ENCODE measurements at regions of chr18 and their contacts with region 1.

Region 1: GRCh38 chr18:76492669-76493212 is 2.3 kb downstream of the ZNF516 start:
- DNase-seq: peak; percentile 99
- H3K4me3 Mint-ChIP-seq: peak overlapping the region; percentile 84
- H3K27ac Mint-ChIP-seq: peak overlapping the region; percentile 42
- H3K4me1 Mint-ChIP-seq: peaks cover 33% of the 10 kb centered on the region
- H3K27me3 Mint-ChIP-seq: peaks cover 60% of the 10 kb centered on the region

Region 2: GRCh38 chr18:76195601-76196000 is 297.1 kb before region 1 on chr18:
- CTCF ChIA-PET with region 1: no interaction called
- POLR2A ChIA-PET with region 1: no interaction called
- intact Hi-C with region 1: no loop called
- DNase-seq: no peak
- H3K4me3 Mint-ChIP-seq: no peak overlapping the region
- H3K27ac Mint-ChIP-seq: no peak overlapping the region
- H3K4me1 Mint-ChIP-seq: no peaks in the 10 kb centered on the region
- H3K27me3 Mint-ChIP-seq: peaks cover 13% of the 10 kb centered on the region

Region 3: GRCh38 chr18:76374330-76375281 is 118.1 kb before region 1 on chr18:
- CTCF ChIA-PET with region 1: no interaction called
- POLR2A ChIA-PET with region 1: no interaction called
- intact Hi-C with region 1: loop called (anchors 2 kb)
- DNase-seq: peak; percentile 75
- H3K4me3 Mint-ChIP-seq: no peak overlapping the region
- H3K27ac Mint-ChIP-seq: peak overlapping the region; percentile 64
- H3K4me1 Mint-ChIP-seq: peaks cover 50% of the 10 kb centered on the region
- H3K27me3 Mint-ChIP-seq: peaks cover 1% of the 10 kb centered on the region

Region 4: DNA sequence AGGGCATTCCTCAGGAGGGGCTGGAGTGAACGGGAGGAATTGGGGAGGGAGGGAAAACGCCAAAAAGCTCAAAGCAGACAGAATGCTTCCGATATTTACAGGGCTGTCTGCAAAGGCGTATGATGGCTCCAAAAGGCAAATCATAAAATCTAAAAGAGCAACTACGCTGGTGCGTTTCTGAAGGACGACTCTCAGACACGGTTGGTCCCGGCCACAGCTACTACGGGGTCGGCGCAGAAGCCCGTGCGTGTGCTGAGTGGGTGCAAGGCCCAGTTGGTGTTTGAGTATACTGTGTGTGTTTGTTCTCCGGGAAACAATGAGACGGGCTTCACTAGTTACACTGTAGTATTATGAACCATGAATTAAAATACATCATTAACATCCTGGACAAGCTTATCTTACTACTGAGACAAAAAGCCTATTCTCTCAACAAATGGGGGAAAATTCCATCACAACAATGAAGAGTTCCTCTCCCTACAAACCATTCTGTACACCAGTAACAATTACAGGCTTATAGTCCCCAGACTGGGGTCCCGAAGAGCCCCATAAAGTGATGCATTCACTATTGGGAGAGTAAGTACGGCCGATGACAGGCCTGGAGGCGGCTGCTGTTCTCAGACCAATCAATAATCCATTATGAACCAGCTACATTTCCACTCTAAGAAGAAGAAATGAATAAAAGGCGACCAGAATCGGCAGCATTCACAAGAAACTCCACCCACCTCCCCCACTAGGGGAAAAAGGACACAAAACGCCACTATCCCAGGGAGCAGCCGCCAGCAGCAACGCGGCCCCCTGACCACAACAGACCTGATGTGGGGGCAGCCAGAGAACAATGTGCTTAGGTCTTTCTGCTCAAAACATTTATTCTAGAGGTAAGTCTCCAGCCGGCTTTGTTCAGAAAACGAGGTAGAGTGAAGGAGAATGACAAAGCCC is 41.1 kb before region 1 on chr18:
- CTCF ChIA-PET with region 1: no interaction called
- POLR2A ChIA-PET with region 1: no interaction called
- intact Hi-C with region 1: loop called (anchors 2 kb)
- DNase-seq: peak; percentile 7
- H3K4me3 Mint-ChIP-seq: peak overlapping the region; percentile 72
- H3K27ac Mint-ChIP-seq: no peak overlapping the region
- H3K4me1 Mint-ChIP-seq: peaks cover 19% of the 10 kb centered on the region
- H3K27me3 Mint-ChIP-seq: peaks cover 38% of the 10 kb centered on the region

Region 5: GRCh38 chr18:76620321-76621170 is 127.8 kb after region 1 on chr18:
- CTCF ChIA-PET with region 1: no interaction called
- POLR2A ChIA-PET with region 1: no interaction called
- intact Hi-C with region 1: loop called (anchors 5 kb)
- DNase-seq: peak; percentile 38
- H3K4me3 Mint-ChIP-seq: no peak overlapping the region
- H3K27ac Mint-ChIP-seq: no peak overlapping the region
- H3K4me1 Mint-ChIP-seq: peaks cover 4% of the 10 kb centered on the region
- H3K27me3 Mint-ChIP-seq: peaks cover 33% of the 10 kb centered on the region

Region 6: DNA sequence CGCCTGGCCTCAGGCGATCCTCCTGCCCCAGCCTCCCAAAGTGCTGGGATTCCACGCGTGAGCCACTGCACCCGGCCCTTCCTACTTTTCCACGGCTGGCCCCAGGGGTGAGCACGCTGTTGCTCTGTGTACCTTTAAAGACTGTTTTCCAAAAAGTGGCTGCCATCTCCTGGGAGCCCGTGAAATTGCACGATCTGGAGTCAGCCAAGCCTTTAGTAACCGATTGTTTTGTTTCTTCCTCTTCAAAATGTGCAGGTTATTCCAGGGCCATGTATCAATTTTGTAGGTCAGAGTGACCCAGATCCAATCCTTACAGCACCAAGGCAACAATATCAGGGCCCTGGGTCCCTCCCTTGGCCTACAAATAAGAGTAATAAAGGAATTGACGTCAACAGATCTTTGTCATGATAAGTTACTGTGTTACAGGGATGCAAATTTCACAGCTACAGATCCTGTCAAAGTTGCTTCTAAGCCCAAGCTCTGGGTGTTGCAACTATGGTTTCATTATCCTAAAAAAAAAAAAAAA is 194.1 kb after region 1 on chr18:
- CTCF ChIA-PET with region 1: no interaction called
- POLR2A ChIA-PET with region 1: no interaction called
- intact Hi-C with region 1: loop called (anchors 2 kb)
- DNase-seq: peak; percentile 27
- H3K4me3 Mint-ChIP-seq: no peak overlapping the region
- H3K27ac Mint-ChIP-seq: peak overlapping the region; percentile 10
- H3K4me1 Mint-ChIP-seq: peaks cover 16% of the 10 kb centered on the region
- H3K27me3 Mint-ChIP-seq: peaks cover 39% of the 10 kb centered on the region

Region 7: GRCh38 chr18:76822510-76823160 is 329.9 kb after region 1 on chr18 and contains the start of gene ZNF236:
- CTCF ChIA-PET with region 1: no interaction called
- POLR2A ChIA-PET with region 1: no interaction called
- intact Hi-C with region 1: loop called (anchors 1 kb)
- DNase-seq: peak; percentile 72
- H3K4me3 Mint-ChIP-seq: peak within 1 kb of the TSS; percentile 89
- H3K27ac Mint-ChIP-seq: peak within 1 kb of the TSS; percentile 87
- H3K4me1 Mint-ChIP-seq: peaks cover 51% of the 10 kb centered on the region
- H3K27me3 Mint-ChIP-seq: no peaks in the 10 kb centered on the region
- total RNA-seq, gene ZNF236: 14.4 to 15.6 TPM

Region 8: DNA sequence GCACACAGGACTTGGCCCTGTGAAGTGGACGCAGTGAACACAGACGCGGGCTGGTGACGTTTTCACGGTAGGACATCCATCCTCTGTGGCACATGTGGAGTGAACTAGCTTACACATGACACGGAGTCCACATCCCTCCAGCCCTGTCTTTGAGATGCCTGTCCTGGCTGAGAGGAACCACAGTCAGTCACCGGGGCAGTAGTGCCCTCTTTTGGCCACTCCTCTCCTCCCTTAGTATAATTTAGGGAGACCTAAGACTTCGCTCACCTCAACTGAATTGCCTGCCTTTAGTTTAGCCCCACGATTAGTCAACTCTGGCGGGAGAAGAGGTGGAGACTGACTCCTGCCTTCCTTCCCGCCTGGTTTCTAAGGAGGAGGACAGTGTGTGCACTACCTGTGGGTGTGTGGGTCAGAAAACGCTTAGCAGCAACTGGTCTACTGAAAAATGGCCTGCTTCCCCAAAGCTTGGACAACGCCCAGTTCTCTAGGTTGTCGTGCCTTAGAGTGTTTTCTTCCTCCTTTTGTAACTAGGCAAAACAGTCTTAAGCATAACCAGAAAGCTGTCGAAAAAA is 569.3 kb after region 1 on chr18:
- CTCF ChIA-PET with region 1: no interaction called
- POLR2A ChIA-PET with region 1: no interaction called
- intact Hi-C with region 1: loop called (anchors 5 kb)
- DNase-seq: peak; percentile 62
- H3K4me3 Mint-ChIP-seq: peak overlapping the region; percentile 58
- H3K27ac Mint-ChIP-seq: peak overlapping the region; percentile 100
- H3K4me1 Mint-ChIP-seq: peaks cover 85% of the 10 kb centered on the region
- H3K27me3 Mint-ChIP-seq: no peaks in the 10 kb centered on the region

Region 9: GRCh38 chr18:77160515-77160914 is 667.8 kb after region 1 on chr18:
- CTCF ChIA-PET with region 1: no interaction called
- POLR2A ChIA-PET with region 1: no interaction called
- intact Hi-C with region 1: no loop called
- DNase-seq: no peak
- H3K4me3 Mint-ChIP-seq: no peak overlapping the region
- H3K27ac Mint-ChIP-seq: no peak overlapping the region
- H3K4me1 Mint-ChIP-seq: no peaks in the 10 kb centered on the region
- H3K27me3 Mint-ChIP-seq: no peaks in the 10 kb centered on the region

Region 10: GRCh38 chr18:77487951-77488740 is 995.4 kb after region 1 on chr18:
- CTCF ChIA-PET with region 1: no interaction called
- POLR2A ChIA-PET with region 1: no interaction called
- intact Hi-C with region 1: no loop called
- DNase-seq: no peak
- H3K4me3 Mint-ChIP-seq: no peak overlapping the region
- H3K27ac Mint-ChIP-seq: no peak overlapping the region
- H3K4me1 Mint-ChIP-seq: no peaks in the 10 kb centered on the region
- H3K27me3 Mint-ChIP-seq: peaks cover 14% of the 10 kb centered on the region